ENCODE measurements at regions of chr18 and their contacts with region 1.

Region 1: GRCh38 chr18:51197661-51198424 is at the start of gene MEX3C:
- DNase-seq: peak; percentile 100
- total RNA-seq, gene MEX3C: 21.6 TPM

Region 2: DNA sequence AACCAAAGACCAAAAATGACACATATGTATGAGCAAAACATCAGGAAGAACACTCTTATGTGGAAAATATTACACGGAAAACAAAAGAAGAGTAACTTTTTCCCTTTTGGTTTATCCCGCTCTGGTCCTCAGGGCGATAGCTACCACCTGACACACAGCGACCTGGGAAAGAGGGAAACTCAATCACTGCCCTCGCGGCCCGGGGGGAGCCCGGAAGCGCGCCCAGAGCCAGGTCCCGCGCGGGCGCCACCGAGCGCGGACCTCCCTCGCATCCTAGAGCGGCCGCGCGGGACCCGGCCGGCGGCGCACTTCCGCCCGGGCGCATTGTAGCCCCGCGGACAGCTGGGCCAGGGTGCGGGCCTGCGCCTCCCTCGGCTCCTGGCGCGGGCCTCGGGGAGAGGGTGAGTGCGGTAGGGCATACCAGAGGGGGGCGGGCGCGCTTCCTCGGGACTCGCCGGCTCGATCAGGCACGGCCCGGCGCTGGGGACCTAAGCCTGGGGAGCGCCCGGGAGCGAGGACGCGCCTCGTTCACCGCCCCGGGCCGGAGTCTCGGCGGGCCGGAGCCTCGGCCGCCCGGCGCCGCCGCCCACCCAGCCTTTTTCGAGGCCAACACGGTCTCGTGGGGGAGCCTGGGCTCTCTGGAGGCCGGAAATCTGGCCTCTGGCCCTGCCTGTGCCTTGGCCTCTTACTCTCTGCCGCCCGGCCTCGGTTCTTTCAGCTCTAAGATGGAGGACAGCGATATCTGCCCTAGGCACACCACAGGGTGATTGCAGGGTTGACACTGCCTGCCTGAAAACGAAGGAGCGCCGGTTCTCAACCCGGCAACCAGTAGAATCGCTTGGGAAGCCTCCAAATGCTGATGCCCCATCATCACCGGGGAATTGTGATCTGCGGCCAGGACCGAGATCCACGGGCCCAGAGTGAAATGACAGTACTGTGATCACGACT is 229.9 kb before region 1 on chr18 and contains the start of gene ELAC1:
- intact Hi-C with region 1: loop called (anchors 5 kb)
- DNase-seq: peak; percentile 88
- total RNA-seq, gene ELAC1: 4.5 TPM

Region 3: GRCh38 chr18:51029694-51030536 is 167.9 kb before region 1 on chr18 and contains the start of gene SMAD4:
- intact Hi-C with region 1: loop called (anchors 2 kb)
- DNase-seq: peak; percentile 99
- total RNA-seq, gene SMAD4: 88.7 TPM